Right lobe of liver (tissue), 6 donors: ENCODE measurements at regions of chr1 and their contacts with region 1.

Region 1: GRCh38 chr1:2044510-2045319 is 5.5 kb upstream of the PRKCZ start:
- DNase-seq: peak; percentile 77 to 81 (median 81)
- ATAC-seq: peak; percentile 51 to 57 (median 54)
- H3K4me3 ChIP-seq: peak overlapping the region in 2 of 3 donors; percentile 9 to 30
- H3K27ac ChIP-seq: no peak overlapping the region
- H3K4me1 ChIP-seq: peaks cover 0 to 44% (median 8%) of the 10 kb centered on the region in 4 donors
- H3K27me3 ChIP-seq: no peaks in the 10 kb centered on the region
- CTCF ChIP-seq: peak; percentile 70 to 95 (median 86)
- POLR2A ChIP-seq: no peak

Region 2: DNA sequence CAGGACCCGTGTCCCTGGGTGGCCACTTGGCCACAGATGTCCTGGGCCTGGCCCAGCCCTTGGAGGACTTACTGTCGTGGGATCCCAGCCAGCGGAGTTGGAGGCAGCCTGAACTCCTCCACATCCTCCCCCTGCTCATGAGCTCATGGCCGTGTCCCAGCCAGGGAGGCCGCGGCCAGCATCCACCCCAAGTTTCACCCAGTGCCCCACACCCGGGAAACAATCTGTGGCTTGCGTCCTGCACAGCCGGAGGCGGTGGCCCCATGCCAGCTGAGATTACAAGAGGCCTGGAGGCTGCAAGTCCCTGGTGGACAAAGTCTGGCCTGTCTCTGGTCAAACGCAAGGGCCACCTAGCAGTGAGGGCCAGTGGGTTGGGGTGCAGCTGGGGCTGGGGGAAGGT is 98.2 kb before region 1 on chr1:
- intact Hi-C with region 1: loop called in 1 of 2 experiments (anchors 5 kb)
- DNase-seq: peak in 2 of 3 donors; percentile 70 to 83
- ATAC-seq: peak; percentile 12 to 46 (median 34)
- H3K4me3 ChIP-seq: no peak overlapping the region
- H3K27ac ChIP-seq: no peak overlapping the region
- H3K4me1 ChIP-seq: peaks cover 0 to 14% (median 7%) of the 10 kb centered on the region in 4 donors
- H3K27me3 ChIP-seq: no peaks in the 10 kb centered on the region
- CTCF ChIP-seq: no peak
- POLR2A ChIP-seq: no peak

Region 3: DNA sequence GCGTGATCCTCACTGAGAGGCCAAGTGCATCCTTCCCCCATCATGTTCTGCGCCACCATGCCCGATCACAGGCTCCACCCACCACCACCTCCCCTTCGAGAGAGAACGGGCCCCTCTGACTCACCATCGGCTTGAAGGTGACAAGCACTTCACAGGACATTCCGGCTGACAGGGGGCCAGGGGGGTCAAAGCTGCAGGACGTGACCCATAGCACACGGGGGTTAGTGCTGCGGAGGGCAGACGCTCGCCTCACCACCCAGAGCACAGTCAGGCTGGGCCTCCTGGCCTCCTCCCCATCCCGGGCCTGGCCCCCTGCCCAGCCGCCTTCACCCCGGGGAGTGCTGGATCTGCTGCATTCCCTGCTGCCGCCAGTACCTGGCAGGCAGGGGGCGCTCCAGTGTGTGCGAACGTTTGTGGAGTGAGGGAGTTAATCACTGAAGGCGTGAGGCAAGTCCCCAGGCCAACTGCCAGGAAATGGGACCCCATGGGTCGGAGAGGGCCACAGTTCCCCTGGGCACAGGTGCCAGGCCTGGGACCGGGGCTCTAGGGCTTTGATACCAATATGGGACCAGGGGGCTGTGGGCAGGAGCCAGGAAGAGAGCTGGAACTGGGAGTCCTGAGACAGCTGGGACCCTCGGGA is 84.8 kb before region 1 on chr1:
- intact Hi-C with region 1: loop called (anchors 5 kb)
- DNase-seq: peak; percentile 86 to 90 (median 87)
- ATAC-seq: peak; percentile 79 to 89 (median 88)
- H3K4me3 ChIP-seq: no peak overlapping the region
- H3K27ac ChIP-seq: no peak overlapping the region
- H3K4me1 ChIP-seq: no peaks in the 10 kb centered on the region
- H3K27me3 ChIP-seq: no peaks in the 10 kb centered on the region
- CTCF ChIP-seq: peak; percentile 81 to 91 (median 86)
- POLR2A ChIP-seq: no peak

Region 4: DNA sequence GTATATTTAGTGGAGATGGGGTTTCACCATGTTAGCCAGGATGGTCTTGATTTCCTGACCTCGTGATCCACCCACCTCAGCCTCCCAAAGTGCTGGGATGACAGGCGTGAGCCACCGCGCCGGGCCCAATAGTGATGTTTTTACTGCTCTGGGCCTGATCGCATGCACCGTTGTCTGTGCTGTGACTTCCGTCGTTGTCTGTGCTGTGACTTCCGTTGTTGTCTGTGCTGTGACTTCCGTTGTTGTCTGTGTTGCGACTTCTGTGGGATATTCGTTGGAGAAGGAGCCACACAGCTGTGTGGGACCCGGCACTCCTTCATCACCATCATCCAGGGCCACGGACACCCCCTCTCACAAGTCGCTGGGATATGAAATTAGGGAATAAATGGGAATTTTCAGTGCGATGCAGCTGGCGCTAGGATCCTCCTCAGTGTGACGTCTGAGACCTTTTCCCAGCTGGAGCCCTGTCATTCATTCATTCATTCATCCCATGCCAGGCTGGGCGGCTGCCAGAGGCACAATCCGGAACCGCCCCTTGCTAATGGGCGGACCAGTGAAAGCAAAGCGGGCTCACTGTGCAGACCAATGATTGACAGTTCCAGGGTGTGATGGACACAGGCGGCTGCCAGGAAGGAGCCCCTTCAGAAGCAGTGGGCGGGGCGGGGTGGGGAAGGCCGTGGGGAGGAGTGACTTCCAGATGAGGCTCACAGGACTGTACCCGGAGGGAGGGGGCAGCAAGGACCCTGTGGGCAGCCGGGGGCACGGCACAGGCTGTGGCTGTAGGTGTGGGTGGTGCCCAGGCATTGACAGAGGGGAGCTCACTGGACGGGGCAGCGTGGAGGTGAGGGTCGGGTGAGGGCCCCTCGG is 54.4 kb after region 1 on chr1:
- intact Hi-C with region 1: no loop called
- DNase-seq: peak in 1 of 3 donors; percentile 34
- ATAC-seq: no peak
- H3K4me3 ChIP-seq: no peak overlapping the region
- H3K27ac ChIP-seq: no peak overlapping the region
- H3K4me1 ChIP-seq: no peaks in the 10 kb centered on the region
- H3K27me3 ChIP-seq: no peaks in the 10 kb centered on the region
- CTCF ChIP-seq: no peak
- POLR2A ChIP-seq: no peak

Region 5: GRCh38 chr1:2148691-2149090 is 104.0 kb after region 1 on chr1:
- intact Hi-C with region 1: no loop called
- DNase-seq: no peak
- ATAC-seq: peak; percentile 67 to 80 (median 72)
- H3K4me3 ChIP-seq: no peak overlapping the region
- H3K27ac ChIP-seq: peak overlapping the region in 2 of 3 donors; percentile 33 to 47
- H3K4me1 ChIP-seq: no peaks in the 10 kb centered on the region
- H3K27me3 ChIP-seq: no peaks in the 10 kb centered on the region
- CTCF ChIP-seq: no peak
- POLR2A ChIP-seq: no peak

Region 6: DNA sequence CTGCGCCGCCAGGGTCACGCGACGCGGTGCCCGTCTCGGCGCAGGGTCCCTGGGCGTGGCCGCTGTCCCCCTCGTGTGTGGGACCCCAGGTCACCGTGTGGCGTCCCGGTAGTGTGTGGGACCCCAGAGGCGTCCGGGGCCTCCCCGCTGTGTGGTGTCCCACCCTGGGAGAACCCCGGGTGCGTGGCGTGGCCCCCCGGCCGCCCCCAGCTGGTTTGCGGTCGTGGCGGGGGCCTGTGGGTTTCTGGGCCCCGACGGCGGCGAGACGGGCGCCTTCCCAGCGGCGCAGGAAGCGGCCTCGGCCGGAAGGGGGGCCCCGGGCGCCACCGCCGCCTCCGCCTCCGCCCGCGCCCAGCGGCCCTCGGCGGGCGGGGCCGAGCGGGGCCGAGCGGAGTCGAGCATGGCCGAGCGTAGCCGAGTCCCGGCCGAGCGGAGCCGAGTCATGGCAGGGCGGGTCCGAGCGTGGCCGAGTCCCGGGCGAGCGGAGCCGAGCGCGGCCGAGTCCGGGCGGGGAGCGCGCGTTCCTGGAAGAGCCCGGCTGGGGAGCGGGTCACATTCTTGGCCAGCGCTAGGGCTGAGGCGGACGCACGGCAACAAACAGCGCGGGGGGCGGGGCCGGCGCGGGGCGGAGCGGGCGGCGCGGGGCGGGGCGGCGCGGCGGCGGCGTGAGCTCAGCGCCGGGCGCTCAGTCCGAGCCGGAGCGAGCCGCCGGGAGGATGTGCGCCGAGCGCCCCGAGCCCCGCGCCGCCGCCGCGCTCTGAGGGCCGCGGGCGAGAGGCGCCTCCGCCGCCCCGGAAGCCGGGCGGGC is 182.8 kb after region 1 on chr1:
- intact Hi-C with region 1: no loop called
- DNase-seq: peak; percentile 96 to 97 (median 96)
- ATAC-seq: peak; percentile 75 to 81 (median 78)
- H3K4me3 ChIP-seq: peak overlapping the region; percentile 73 to 80 (median 78)
- H3K27ac ChIP-seq: peak overlapping the region; percentile 97
- H3K4me1 ChIP-seq: peaks cover 0 to 27% (median 13%) of the 10 kb centered on the region in 4 donors
- H3K27me3 ChIP-seq: no peaks in the 10 kb centered on the region
- CTCF ChIP-seq: peak in 2 of 4 donors; percentile 29 to 35
- POLR2A ChIP-seq: peak; percentile 95

Region 7: DNA sequence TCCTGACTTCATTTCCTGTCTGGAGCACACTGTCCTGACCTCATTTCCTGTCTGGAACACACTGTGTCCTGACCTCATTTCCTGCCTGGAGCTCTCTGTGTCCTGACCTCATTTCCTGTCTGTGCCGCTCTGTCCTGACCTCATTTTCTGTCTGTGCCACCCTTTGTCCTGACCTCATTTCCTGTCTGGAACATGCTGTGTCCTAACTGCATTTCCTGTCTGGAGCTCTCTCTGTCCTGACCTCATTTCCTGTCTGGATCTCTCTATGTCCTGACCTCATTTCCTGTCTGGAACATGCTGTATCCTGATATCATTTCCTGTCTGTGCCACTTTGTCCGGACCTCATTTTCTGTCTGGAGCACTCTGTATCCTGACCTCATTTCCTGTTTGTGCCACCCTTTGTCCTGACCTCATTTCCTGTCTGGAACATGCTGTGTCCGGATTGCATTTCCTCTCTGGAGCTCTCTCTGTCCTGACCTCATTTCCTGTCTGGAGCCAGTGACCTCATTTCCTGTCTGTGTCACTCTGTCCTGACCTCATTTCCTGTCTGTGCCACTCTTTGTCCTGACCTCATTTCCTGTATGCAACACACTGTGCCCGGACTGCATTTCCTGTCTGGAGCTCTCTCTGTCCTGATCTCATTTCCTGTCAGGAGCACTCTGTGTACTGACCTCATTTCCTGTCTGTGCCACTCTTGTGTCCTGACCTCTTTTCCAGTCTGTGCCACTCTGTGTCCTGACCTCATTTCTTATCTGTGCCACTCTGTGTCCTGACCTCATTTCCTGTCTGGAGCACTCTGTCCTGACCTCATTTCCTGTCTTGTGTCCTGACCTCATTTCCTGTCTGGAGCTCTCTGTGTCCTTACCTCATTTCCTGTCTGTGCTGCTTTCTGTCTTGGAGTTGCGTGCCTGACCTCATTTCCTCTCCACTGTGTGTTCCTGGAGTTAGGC is 211.0 kb after region 1 on chr1:
- intact Hi-C with region 1: no loop called
- DNase-seq: no peak
- ATAC-seq: peak in 1 of 4 donors; percentile 8
- H3K4me3 ChIP-seq: no peak overlapping the region
- H3K27ac ChIP-seq: peak overlapping the region; percentile 20 to 47 (median 36)
- H3K4me1 ChIP-seq: peaks cover 0 to 34% (median 11%) of the 10 kb centered on the region in 4 donors
- H3K27me3 ChIP-seq: no peaks in the 10 kb centered on the region
- CTCF ChIP-seq: no peak
- POLR2A ChIP-seq: no peak